ENCODE measurements at regions of chr11 and their contacts with region 1.

Region 1: DNA sequence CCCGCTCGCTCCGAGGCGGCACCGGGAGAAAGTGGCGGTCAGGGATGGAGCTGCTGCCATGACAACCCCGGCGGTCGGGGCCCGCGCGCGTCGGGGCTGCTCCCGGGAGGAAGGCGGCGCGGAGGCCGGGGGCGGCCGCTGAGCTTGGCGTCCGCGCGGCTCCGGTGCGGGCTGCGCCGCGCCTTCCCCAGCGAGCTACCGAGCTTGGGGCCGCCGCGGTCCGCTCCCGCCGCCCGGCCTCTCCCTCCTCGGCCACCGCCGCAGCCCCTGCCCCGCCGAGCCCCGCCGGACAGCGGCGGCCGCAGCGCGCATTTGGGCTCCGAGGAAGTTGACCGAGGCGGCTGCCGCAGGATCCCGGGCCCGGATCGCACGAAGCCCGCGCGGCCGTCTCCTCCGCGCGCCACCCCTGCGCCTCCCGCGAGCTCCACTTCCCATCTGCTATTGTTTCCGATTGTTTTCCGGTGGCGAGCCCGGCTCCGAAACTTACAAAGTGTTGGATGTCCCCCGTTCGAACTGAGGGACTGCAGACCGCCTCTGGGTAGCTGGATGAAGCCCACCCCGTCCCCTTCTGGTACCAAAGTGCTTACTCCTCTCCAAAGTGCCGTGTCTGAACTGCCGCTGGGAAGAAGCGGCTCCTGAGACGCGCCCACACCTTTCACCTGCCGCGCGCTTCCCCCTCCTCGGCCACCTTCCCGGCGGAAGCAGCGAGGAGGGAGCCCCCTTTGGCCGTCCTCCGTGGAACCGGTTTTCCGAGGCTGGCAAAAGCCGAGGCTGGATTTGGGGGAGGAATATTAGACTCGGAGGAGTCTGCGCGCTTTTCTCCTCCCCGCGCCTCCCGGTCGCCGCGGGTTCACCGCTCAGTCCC is 540.3 kb downstream of the NTM start:
- DNase-seq: peak in 3 of 10 donors; percentile 62 to 71 (median 64)
- H3K4me3 ChIP-seq: peak overlapping the region; percentile 37 to 78 (median 62)
- H3K27ac ChIP-seq: peak overlapping the region in 49 of 59 donors; percentile 21 to 91 (median 74)
- H3K27me3 ChIP-seq: peaks cover 0 to 16% (median 0%) of the 10 kb centered on the region in 45 donors
- CTCF ChIP-seq: peak in 1 of 56 donors; percentile 3

Region 2: GRCh38 chr11:131748151-131749050 is 162.4 kb before region 1 on chr11:
- intact Hi-C with region 1: loop called (anchors 5 kb)
- DNase-seq: peak; percentile 57 to 86 (median 80)
- H3K4me3 ChIP-seq: no peak overlapping the region
- H3K27ac ChIP-seq: peak overlapping the region in 12 of 59 donors; percentile 5 to 68 (median 20)
- H3K27me3 ChIP-seq: no peaks in the 10 kb centered on the region
- CTCF ChIP-seq: peak; percentile 74 to 96 (median 90)

Measured in dorsolateral prefrontal cortex (tissue), 120 donors.